T-cell (primary cell): ENCODE measurements at regions of chrX and their contacts with region 1.

Region 1: GRCh38 chrX:106481341-106481740 is 130.4 kb upstream of the RADX start:
- DNase-seq: peak in 14 of 35 experiments; percentile 4 to 60 (median 16)
- ATAC-seq: peak in 1 of 4 experiments; percentile 21
- H3K4me3 ChIP-seq: no peak overlapping the region
- H3K4me3 Mint-ChIP-seq: no peak overlapping the region
- H3K27ac ChIP-seq: no peak overlapping the region
- H3K27ac Mint-ChIP-seq: no peak overlapping the region
- H3K4me1 ChIP-seq: no peaks in the 10 kb centered on the region
- H3K4me1 Mint-ChIP-seq: peaks cover 14 to 24% (median 23%) of the 10 kb centered on the region in 3 donors
- H3K27me3 ChIP-seq: no peaks in the 10 kb centered on the region
- H3K27me3 Mint-ChIP-seq: no peaks in the 10 kb centered on the region

Region 2: DNA sequence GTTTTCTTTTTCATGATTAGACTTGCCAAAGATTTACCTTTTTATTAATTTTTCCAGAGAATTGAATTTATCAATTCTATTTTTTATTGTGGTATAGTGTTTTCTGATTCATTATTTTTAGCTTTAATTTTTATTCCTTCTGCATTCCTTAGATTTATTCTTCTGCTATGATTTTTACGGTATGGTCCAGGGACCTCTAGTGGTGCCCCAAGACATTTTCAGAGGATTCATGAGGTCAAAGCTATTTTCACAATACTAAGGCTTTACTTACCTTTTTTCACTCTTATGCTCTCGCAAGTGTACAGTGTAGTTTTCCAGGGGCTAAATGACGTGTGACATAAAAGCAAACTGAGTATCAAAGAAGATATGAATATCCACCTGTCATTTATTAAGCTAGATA is 138.5 kb after region 1 on chrX:
- CTCF ChIA-PET with region 1: interaction called, 10 to 13 read pairs
- POLR2A ChIA-PET with region 1: no interaction called
- DNase-seq: peak in 1 of 35 experiments; percentile 21
- ATAC-seq: no peak
- H3K4me3 ChIP-seq: no peak overlapping the region
- H3K4me3 Mint-ChIP-seq: no peak overlapping the region
- H3K27ac ChIP-seq: no peak overlapping the region
- H3K27ac Mint-ChIP-seq: no peak overlapping the region
- H3K4me1 ChIP-seq: no peaks in the 10 kb centered on the region
- H3K4me1 Mint-ChIP-seq: peaks cover 0 to 12% (median 4%) of the 10 kb centered on the region in 3 donors
- H3K27me3 ChIP-seq: no peaks in the 10 kb centered on the region
- H3K27me3 Mint-ChIP-seq: peaks cover 0 to 9% of the 10 kb centered on the region in 2 donors